Dendritic cell treated with granulocyte-macrophage colony-stimulating factor and Interleukin-4, amounts not matched to agents 40 ng/mL and 50 ng/mL, for 4 days (primary cell): ENCODE measurements at regions of chr20 and their contacts with region 1.

Region 1: GRCh38 chr20:324177-325044 is 941 bp upstream of the SOX12 start:
- H3K4me3 Mint-ChIP-seq: peak overlapping the region; percentile 69
- H3K27ac Mint-ChIP-seq: peak overlapping the region; percentile 77
- H3K4me1 Mint-ChIP-seq: peaks cover 38% of the 10 kb centered on the region
- H3K27me3 Mint-ChIP-seq: peaks cover 25% of the 10 kb centered on the region

Region 2: DNA sequence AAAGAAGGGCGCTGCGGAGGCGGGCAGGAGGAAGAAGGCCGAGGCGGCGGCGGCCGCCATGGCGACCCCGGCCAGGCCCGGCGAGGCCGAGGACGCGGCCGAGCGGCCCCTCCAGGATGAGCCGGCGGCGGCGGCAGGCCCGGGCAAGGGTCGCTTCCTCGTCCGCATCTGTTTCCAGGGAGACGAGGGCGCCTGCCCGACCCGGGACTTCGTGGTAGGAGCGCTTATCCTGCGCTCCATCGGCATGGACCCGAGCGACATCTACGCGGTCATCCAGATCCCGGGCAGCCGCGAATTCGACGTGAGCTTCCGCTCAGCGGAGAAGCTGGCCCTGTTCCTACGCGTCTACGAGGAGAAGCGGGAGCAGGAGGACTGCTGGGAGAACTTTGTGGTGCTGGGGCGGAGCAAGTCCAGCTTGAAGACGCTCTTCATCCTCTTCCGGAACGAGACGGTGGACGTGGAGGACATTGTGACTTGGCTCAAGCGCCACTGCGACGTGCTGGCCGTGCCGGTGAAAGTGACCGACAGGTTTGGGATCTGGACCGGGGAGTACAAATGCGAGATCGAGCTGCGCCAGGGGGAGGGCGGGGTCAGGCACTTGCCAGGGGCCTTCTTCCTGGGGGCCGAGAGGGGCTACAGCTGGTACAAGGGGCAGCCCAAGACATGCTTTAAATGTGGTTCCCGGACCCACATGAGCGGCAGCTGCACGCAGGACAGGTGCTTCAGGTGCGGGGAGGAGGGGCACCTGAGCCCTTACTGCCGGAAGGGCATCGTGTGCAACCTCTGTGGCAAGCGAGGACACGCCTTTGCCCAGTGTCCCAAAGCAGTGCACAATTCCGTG is 26.3 kb before region 1 on chr20:
- intact Hi-C with region 1: loop called (anchors 2 kb)
- H3K4me3 Mint-ChIP-seq: peak overlapping the region; percentile 92
- H3K27ac Mint-ChIP-seq: peak overlapping the region; percentile 99
- H3K4me1 Mint-ChIP-seq: peaks cover 48% of the 10 kb centered on the region
- H3K27me3 Mint-ChIP-seq: no peaks in the 10 kb centered on the region

Region 3: DNA sequence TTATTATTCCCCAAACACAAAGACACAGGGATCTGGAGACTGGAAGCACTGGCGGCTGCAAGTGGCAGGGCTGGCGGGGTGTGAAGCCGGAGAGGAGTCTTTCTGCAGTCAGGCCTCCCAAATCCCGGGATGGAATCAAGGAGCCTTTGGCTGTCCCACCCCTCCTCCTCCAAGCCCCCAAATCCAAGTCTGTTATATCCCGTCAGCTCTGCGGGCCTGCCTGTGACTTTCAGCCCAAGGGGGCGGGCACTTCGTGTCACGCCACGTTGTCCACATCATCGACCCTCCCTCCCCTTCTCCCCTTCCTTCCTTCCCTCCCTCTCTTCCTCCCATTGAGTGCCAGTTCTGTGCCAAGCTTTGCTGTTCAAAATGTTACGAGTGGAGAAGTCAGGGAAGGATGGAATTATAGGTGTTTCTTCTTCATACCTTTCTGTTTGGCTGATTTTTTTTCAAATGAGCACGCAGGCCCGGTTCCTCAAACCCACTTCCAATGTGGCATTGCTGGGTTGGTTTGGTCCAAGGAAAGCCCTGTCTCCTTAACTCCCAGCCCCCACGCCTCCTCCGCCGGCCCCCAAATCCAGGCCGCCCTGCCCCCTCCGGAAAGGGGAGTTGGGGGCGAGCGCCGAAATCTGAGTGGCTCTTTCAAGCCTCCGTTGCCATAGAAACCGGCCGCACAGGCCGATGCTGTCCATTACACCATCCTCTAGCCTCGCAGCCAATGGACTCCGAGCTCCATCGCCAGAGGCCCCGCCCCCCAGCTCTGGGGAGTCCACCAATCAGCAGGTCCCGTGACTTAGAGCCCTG is 14.4 kb before region 1 on chr20:
- intact Hi-C with region 1: loop called (anchors 2 kb)
- H3K4me3 Mint-ChIP-seq: peak overlapping the region; percentile 73
- H3K27ac Mint-ChIP-seq: peak overlapping the region; percentile 62
- H3K4me1 Mint-ChIP-seq: peaks cover 43% of the 10 kb centered on the region
- H3K27me3 Mint-ChIP-seq: no peaks in the 10 kb centered on the region

Region 4: GRCh38 chr20:371755-372542 is 47.5 kb after region 1 on chr20:
- intact Hi-C with region 1: loop called (anchors 2 kb)
- H3K4me3 Mint-ChIP-seq: no peak overlapping the region
- H3K27ac Mint-ChIP-seq: peak overlapping the region; percentile 81
- H3K4me1 Mint-ChIP-seq: peaks cover 37% of the 10 kb centered on the region
- H3K27me3 Mint-ChIP-seq: no peaks in the 10 kb centered on the region

Region 5: GRCh38 chr20:462199-462991 is 138.0 kb after region 1 on chr20 and contains the start of gene TBC1D20:
- intact Hi-C with region 1: no loop called
- H3K4me3 Mint-ChIP-seq: peak within 1 kb of the TSS; percentile 89
- H3K27ac Mint-ChIP-seq: peak within 1 kb of the TSS; percentile 83
- H3K4me1 Mint-ChIP-seq: peaks cover 36% of the 10 kb centered on the region
- H3K27me3 Mint-ChIP-seq: peaks cover 8% of the 10 kb centered on the region